Prostate gland (tissue), 2 donors: ENCODE measurements at regions of chr5 and their contacts with region 1.

Region 1: DNA sequence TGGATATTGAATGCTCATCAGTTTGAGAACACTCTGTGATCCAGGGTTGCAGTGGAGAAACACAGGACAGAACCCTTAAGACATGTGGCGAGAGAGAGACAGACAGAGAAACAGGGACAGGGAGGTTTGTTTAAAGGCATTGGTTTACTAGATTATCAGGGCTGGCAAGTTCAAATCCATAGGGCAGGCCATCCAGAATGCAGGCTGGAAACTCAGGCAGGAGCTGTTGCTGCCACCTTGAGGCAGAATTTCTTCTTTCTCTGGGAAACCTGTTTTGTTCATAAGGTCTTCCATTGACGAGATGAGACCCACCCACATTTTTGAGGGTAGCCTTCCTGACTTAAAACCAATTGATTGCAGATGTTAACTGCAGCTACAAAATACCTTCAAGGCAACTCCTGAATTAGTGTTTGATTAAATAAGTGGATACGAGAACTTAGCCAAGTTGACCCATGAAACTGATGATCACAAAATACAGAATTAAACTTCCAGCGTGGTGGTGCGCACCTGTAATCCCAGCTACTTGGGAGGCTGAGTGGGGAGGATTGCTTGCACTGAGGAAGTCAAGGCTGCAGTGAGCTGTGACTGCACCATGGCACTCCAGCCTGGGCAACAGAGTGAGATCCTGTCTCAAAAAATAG is 55.9 kb downstream of the NSUN2 start:
- DNase-seq: peak; percentile 45
- H3K4me3 ChIP-seq: no peak overlapping the region
- H3K27ac ChIP-seq: no peak overlapping the region
- H3K4me1 ChIP-seq: no peaks in the 10 kb centered on the region
- H3K27me3 ChIP-seq: no peaks in the 10 kb centered on the region
- CTCF ChIP-seq: peak in 3 of 4 experiments; percentile 57 to 61 (median 60)
- POLR2A ChIP-seq: no peak

Region 2: DNA sequence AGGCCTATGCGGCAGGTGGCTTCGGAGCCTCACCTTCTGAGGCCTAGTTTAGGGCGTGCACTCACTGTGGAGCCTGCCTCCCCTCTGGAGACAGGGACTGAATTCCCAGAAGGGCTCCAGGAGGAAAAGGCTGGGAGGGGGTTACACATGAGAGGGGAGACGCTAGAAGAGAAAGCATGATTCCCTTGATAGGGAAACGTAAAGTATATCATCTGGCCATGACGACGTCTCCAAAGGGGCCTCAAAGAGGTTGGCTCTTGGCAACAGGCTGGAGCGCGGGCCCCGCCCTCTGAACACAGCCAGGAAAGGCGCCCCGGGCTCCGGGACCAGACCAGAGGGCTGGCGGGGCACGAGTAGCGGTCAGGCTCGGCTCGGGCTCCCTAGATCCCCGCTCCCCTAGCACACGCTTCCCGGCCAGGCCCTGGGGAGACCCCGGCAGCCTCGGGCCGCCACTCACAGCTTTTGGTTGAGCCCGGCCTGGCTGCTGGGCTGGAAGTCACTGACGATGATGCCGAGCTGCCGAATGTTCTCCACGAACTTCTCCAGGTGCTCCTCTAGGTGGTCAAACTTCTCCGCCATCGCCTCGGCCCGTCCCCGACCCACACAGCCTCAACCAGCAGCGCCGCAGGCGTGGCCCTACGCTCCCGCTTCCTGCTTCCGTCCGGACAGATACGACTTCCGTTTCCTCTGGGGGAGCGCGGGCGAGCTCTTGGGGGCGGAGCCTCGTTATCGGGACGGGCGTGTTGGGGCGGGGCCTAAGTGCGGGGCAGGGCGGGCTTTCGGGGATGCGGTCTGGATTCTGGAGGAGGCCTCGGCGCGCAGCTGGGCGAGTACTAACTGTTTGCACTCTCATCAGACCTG is 198.8 kb before region 1 on chr5 and contains the start of gene MED10:
- intact Hi-C with region 1: loop called (anchors 5 kb)
- DNase-seq: peak; percentile 91
- H3K4me3 ChIP-seq: peak within 1 kb of the TSS; percentile 85 to 94
- H3K27ac ChIP-seq: peak within 1 kb of the TSS; percentile 77
- H3K4me1 ChIP-seq: peaks cover 9% of the 10 kb centered on the region
- H3K27me3 ChIP-seq: no peaks in the 10 kb centered on the region
- CTCF ChIP-seq: no peak
- POLR2A ChIP-seq: peak; percentile 57
- total RNA-seq, gene MED10: 19.7 to 45.3 TPM

Region 3: DNA sequence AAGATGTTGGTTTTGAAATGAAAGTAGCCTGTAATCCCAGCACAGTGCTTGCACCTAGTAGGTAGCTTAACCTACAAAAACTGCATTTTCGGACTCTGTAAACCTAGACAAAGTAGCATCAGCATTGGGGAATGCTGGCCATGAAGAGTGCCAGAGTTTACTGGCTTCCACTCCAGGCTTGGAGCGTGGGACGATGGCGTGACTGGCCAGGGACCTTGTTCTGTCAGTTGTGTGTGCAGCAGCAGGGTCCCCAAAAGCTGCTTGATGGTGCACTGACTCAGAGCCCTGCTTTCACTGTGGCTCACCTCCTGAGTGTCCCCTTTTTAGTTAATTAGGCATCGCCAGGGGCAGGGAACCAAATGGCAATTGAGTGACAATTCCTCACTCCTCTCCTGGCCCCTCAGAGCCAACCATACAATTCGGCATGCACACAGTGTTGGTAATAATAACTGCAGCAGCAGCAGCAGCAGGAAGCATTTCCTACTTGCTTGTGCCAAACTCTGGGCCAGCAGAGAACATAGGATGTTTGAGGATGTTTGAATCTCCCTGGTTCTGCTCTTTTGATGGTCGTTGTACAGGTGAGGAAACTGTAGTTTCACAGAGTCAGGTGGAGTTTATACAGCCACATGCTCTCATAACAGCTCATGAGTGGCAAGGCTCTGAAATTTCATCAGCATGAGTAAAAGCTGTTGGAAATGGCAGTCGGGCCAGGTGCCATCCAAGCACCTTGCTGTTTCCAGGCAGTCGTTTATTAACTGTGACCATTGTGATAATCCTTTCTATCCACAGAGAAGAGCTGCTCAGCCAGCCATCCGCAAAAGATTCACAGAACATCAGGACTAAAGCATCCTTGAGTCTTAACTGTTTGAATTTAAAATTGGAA is 124.1 kb before region 1 on chr5:
- intact Hi-C with region 1: loop called (anchors 10 kb)
- DNase-seq: no peak
- H3K4me3 ChIP-seq: no peak overlapping the region
- H3K27ac ChIP-seq: no peak overlapping the region
- H3K4me1 ChIP-seq: no peaks in the 10 kb centered on the region
- H3K27me3 ChIP-seq: no peaks in the 10 kb centered on the region
- CTCF ChIP-seq: no peak
- POLR2A ChIP-seq: no peak

Region 4: DNA sequence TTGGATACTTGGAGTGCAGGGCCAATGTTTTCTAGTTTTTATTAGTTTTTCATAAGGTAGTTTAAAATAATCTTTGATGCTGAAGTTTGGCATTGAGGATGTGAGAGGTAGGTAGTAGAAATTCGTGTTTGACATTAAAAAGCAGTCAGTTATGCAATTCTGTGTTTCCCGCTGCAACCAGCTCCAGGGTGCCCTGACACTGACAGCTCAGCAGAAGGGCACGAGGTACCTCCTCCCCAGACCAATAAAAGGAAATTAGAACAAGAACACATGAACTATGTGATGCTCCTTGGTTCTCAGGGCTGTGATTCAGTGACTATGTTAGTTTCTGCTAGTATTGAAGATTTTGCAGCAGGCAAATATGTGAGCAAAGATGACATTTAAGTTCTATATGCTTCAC is 15.6 kb after region 1 on chr5:
- intact Hi-C with region 1: no loop called
- DNase-seq: no peak
- H3K4me3 ChIP-seq: no peak overlapping the region
- H3K27ac ChIP-seq: no peak overlapping the region
- H3K4me1 ChIP-seq: no peaks in the 10 kb centered on the region
- H3K27me3 ChIP-seq: no peaks in the 10 kb centered on the region
- CTCF ChIP-seq: no peak
- POLR2A ChIP-seq: no peak